ENCODE measurements at regions of chr7 and their contacts with region 1.

Region 1: DNA sequence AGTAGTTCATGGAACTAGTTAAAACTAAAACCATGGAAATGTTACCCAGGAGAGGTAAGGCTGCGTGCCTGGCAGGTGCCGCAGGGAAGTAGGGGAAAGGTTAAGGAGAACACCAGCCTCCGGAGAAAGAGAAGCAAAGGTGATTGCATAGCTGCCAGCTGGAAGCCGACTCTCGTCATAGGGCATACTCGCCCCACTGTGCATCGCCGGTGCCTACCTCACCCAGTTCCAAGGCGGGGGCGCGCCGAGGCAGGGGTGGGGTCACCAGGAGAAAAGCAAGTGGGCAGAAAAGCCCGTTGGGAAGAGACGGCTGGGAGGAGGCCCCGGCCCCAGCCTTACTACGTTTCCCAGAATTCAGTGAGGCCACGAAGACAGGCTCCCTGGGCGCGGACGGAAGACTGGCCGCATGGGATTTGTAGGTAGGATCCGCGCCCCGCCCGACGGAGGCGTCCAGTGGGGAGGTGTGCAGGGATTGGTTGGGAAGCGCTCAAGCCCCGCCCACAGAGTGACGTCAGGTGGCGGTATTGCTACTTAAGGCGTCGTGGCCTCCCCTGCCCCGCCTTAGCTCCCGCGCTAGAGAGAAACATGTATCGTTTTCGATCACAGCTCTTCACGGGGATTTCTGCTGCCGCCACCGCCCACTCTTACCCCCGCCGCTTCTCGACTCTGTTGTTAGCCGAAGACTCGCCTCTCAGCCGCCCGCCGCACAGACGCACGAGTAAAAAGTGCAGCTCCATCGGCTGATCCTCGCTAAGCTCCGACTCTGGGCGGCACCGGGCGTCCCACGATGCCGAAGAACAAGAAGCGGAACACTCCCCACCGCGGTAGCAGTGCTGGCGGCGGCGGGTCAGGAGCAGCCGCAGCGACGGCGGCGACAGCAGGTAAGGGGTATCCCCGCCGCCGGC is at the start of gene IFRD1:
- DNase-seq: peak; percentile 97 to 98 (median 97)
- H3K4me3 ChIP-seq: peak within 1 kb of the TSS; percentile 94 to 100
- H3K4me3 Mint-ChIP-seq: peak within 1 kb of the TSS; percentile 97 to 100 (median 99)
- H3K27ac ChIP-seq: peak within 1 kb of the TSS; percentile 100
- H3K27ac Mint-ChIP-seq: peak within 1 kb of the TSS; percentile 98 to 100 (median 99)
- H3K4me1 ChIP-seq: peaks cover 36% of the 10 kb centered on the region
- H3K4me1 Mint-ChIP-seq: peaks cover 25 to 48% (median 38%) of the 10 kb centered on the region in 4 donors
- H3K27me3 ChIP-seq: no peaks in the 10 kb centered on the region
- H3K27me3 Mint-ChIP-seq: no peaks in the 10 kb centered on the region
- total RNA-seq, gene IFRD1: 54.2 to 57.0 TPM

Region 2: DNA sequence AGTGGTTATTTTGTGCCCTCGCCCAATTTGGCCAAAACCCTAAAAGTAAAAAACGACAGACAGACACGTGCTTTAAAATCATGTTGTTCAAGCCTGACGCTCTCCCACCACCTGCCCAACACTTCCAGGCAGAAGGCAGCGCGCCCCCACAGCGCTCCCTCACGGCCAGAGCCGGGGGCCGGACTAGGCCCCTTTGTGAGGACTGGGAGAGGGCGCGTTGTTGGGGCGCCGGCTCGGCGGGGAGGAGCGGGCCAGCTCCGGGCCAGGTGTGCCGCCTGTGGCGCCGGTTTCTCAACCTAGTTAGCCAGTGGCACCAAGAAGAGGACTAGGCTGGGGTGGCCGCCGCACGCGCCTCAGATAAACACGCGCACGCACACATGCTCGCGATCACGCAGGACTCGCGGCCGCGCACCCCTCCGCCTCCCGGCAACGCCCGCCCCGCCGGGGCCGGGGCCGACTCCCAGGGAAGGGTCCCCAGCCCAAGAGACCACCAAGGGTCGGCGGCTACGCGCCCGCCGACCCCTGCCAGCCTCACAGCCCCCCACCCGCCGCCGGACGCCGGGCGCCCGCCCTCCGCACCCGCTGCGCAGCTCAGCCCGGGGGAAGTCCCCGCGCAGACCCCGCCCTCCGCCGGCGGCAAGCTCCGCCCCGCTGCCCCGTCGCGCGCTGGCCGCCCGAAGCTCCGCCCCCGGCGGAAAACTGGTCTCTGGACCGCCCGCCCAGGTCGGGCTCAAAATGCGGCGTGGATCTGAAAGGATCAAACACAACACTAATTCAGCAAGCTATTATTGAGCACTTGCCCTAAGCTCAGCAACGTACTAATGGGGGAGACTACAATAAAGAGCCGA is 888.0 kb before region 1 on chr7 and contains the start of gene IMMP2L:
- CTCF ChIA-PET with region 1: no interaction called
- POLR2A ChIA-PET with region 1: interaction called, 6 read pairs
- intact Hi-C with region 1: loop called (anchors 1 kb)
- DNase-seq: peak; percentile 82 to 95 (median 91)
- H3K4me3 ChIP-seq: peak within 1 kb of the TSS; percentile 73 to 74
- H3K4me3 Mint-ChIP-seq: peak within 1 kb of the TSS; percentile 90 to 94 (median 92)
- H3K27ac ChIP-seq: peak within 1 kb of the TSS; percentile 76
- H3K27ac Mint-ChIP-seq: peak within 1 kb of the TSS; percentile 88 to 98 (median 95)
- H3K4me1 ChIP-seq: peaks cover 32% of the 10 kb centered on the region
- H3K4me1 Mint-ChIP-seq: peaks cover 27 to 47% (median 36%) of the 10 kb centered on the region in 4 donors
- H3K27me3 ChIP-seq: no peaks in the 10 kb centered on the region
- H3K27me3 Mint-ChIP-seq: peaks cover 3 to 5% of the 10 kb centered on the region in 2 donors
- total RNA-seq, gene IMMP2L: 29.2 to 32.2 TPM

Region 3: DNA sequence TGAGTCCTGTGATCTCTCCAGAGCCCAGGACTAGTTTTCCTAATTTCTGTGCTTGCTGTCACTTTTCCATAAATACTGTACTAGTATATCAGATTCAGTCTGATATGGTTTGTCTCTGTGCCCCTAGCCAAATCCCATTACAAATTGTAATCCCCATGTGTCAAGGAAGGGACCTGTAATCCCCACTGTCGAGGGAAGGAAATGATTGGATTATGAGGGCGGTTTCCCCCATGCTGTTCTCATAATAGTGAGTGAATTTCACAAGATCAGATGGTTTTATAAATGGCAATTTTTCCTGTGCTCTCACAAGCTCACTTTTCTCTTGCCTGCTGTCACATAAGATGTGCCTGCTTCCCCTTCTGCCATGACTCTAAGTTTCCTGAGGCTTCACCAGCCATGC is 54.7 kb before region 1 on chr7:
- CTCF ChIA-PET with region 1: no interaction called
- POLR2A ChIA-PET with region 1: interaction called, 8 read pairs
- intact Hi-C with region 1: loop called (anchors 1 kb)
- DNase-seq: no peak
- H3K4me3 ChIP-seq: no peak overlapping the region
- H3K4me3 Mint-ChIP-seq: peak overlapping the region in 2 of 8 donors; percentile 4 to 6
- H3K27ac ChIP-seq: no peak overlapping the region
- H3K27ac Mint-ChIP-seq: peak overlapping the region in 1 of 7 donors; percentile 57
- H3K4me1 ChIP-seq: peaks cover 27% of the 10 kb centered on the region
- H3K4me1 Mint-ChIP-seq: peaks cover 27 to 51% (median 32%) of the 10 kb centered on the region in 4 donors
- H3K27me3 ChIP-seq: no peaks in the 10 kb centered on the region
- H3K27me3 Mint-ChIP-seq: peaks cover 7 to 9% of the 10 kb centered on the region in 2 donors

Region 4: GRCh38 chr7:112422842-112423496 is 27.2 kb before region 1 on chr7:
- CTCF ChIA-PET with region 1: no interaction called
- POLR2A ChIA-PET with region 1: interaction called, 10 read pairs
- intact Hi-C with region 1: loop called (anchors 2 kb)
- DNase-seq: peak in 1 of 5 donors; percentile 36
- H3K4me3 ChIP-seq: no peak overlapping the region
- H3K4me3 Mint-ChIP-seq: peak overlapping the region in 1 of 8 donors; percentile 4
- H3K27ac ChIP-seq: no peak overlapping the region
- H3K27ac Mint-ChIP-seq: peak overlapping the region in 2 of 7 donors; percentile 26 to 54
- H3K4me1 ChIP-seq: peaks cover 17% of the 10 kb centered on the region
- H3K4me1 Mint-ChIP-seq: peaks cover 11 to 16% (median 14%) of the 10 kb centered on the region in 4 donors
- H3K27me3 ChIP-seq: no peaks in the 10 kb centered on the region
- H3K27me3 Mint-ChIP-seq: no peaks in the 10 kb centered on the region

Region 5: GRCh38 chr7:112437043-112437442 is 13.1 kb before region 1 on chr7:
- CTCF ChIA-PET with region 1: no interaction called
- POLR2A ChIA-PET with region 1: no interaction called
- intact Hi-C with region 1: no loop called
- DNase-seq: no peak
- H3K4me3 ChIP-seq: no peak overlapping the region
- H3K4me3 Mint-ChIP-seq: no peak overlapping the region
- H3K27ac ChIP-seq: no peak overlapping the region
- H3K27ac Mint-ChIP-seq: no peak overlapping the region
- H3K4me1 ChIP-seq: no peaks in the 10 kb centered on the region
- H3K4me1 Mint-ChIP-seq: no peaks in the 10 kb centered on the region
- H3K27me3 ChIP-seq: no peaks in the 10 kb centered on the region
- H3K27me3 Mint-ChIP-seq: peaks cover 0 to 5% of the 10 kb centered on the region in 2 donors

Region 6: DNA sequence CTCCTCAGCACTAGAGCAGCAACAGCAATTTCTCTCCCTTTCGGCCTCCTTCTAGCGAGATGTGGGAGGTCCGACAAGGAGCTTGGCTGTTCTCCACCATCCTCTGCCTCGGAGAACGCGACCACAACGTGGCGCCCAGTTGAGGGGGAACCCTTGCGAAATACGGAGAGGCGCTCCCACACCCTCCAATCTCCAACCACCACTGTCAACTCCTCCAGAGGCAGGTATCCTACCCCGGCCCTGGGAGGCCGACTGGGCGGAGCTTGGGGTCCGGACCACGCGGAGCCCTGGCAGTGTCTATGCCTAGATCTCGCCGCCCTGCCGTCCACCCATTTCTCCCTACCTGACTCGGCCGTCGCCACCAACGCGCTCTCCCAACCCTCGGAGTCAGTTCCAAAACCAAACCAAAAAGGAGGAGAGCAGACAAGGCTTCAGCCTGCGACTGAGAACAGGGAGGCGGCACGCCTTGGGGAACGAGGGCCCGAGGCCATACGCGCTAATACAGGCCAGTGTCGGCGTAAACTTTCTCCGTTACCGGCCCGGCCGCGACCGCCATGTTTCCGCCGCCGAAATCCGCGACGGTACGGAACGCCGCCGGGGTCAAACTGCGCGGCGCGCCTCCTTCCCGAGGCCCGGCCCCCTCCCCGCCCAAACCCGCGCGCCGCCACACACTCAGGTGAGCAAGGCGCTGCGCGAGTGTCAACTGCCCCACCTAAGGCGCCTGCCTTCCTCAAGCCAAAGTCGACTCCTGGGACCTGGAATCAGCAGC is 339.8 kb after region 1 on chr7 and contains the start of gene TMEM168:
- CTCF ChIA-PET with region 1: no interaction called
- POLR2A ChIA-PET with region 1: no interaction called
- intact Hi-C with region 1: loop called (anchors 1 kb)
- DNase-seq: peak; percentile 83 to 90 (median 85)
- H3K4me3 ChIP-seq: peak within 1 kb of the TSS; percentile 59 to 93
- H3K4me3 Mint-ChIP-seq: peak within 1 kb of the TSS; percentile 91 to 96 (median 94)
- H3K27ac ChIP-seq: peak within 1 kb of the TSS; percentile 76
- H3K27ac Mint-ChIP-seq: peak within 1 kb of the TSS; percentile 82 to 95 (median 92)
- H3K4me1 ChIP-seq: peaks cover 16% of the 10 kb centered on the region
- H3K4me1 Mint-ChIP-seq: peaks cover 27 to 58% (median 38%) of the 10 kb centered on the region in 4 donors
- H3K27me3 ChIP-seq: no peaks in the 10 kb centered on the region
- H3K27me3 Mint-ChIP-seq: no peaks in the 10 kb centered on the region
- total RNA-seq, gene TMEM168: 25.9 to 31.9 TPM

Region 7: GRCh38 chr7:112939574-112940314 is 489.6 kb after region 1 on chr7:
- CTCF ChIA-PET with region 1: no interaction called
- POLR2A ChIA-PET with region 1: interaction called, 23 read pairs
- intact Hi-C with region 1: loop called (anchors 1 kb)
- DNase-seq: peak; percentile 99 to 100 (median 99)
- H3K4me3 ChIP-seq: peak overlapping the region; percentile 71 to 72
- H3K4me3 Mint-ChIP-seq: peak overlapping the region; percentile 92 to 99 (median 96)
- H3K27ac ChIP-seq: peak overlapping the region; percentile 71
- H3K27ac Mint-ChIP-seq: peak overlapping the region; percentile 90 to 99 (median 97)
- H3K4me1 ChIP-seq: peaks cover 40% of the 10 kb centered on the region
- H3K4me1 Mint-ChIP-seq: peaks cover 31 to 59% (median 43%) of the 10 kb centered on the region in 4 donors
- H3K27me3 ChIP-seq: no peaks in the 10 kb centered on the region
- H3K27me3 Mint-ChIP-seq: peaks cover 0 to 4% of the 10 kb centered on the region in 2 donors

Region 8: DNA sequence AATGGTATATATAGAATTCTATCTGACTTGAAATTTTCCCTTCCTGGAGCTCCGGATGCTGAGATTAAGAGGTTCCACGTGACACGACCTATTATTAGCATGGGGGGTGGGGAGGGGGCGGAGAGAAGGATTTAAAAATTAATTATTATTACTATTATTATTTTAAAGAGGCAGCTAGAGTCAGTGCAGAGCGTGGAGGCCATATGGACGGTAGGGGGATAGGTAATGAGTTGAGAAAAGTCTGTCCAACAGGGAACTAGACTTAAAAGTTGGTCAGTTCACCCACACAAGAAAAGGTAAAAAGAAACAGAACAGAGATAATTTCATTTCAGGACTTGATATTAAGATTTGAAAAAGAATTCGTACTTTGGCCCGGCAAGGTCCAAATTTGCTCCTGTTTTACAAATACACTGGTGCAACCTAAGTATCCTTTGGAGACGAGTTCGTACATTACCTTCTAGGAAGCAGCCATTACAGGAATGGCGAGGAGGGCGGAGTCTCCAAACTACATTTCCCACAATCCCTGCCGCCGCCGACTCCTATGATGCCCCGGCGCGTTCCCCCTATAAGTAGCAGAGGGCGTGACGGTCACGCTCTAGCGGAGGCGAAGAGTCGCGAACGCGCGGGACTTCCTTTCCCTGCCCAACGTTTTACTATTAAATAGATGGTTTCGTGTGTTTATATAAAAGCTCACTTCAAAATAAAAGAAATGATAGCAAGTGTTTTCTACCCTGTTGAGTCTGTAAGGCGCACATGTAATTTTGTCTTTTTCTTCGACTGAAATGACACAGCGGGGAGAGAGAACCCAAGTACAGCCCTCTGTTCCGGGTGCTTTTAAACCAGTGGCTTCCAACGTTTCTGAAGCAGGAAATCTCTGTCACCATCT is 668.2 kb after region 1 on chr7 and contains the start of gene SMIM30:
- CTCF ChIA-PET with region 1: no interaction called
- POLR2A ChIA-PET with region 1: interaction called, 5 read pairs
- intact Hi-C with region 1: loop called (anchors 1 kb)
- DNase-seq: peak; percentile 85 to 89 (median 87)
- H3K4me3 ChIP-seq: peak within 1 kb of the TSS; percentile 65 to 70
- H3K4me3 Mint-ChIP-seq: peak within 1 kb of the TSS; percentile 94 to 99 (median 96)
- H3K27ac ChIP-seq: peak within 1 kb of the TSS; percentile 70
- H3K27ac Mint-ChIP-seq: peak within 1 kb of the TSS; percentile 84 to 99 (median 98)
- H3K4me1 ChIP-seq: peaks cover 13% of the 10 kb centered on the region
- H3K4me1 Mint-ChIP-seq: peaks cover 11 to 24% (median 14%) of the 10 kb centered on the region in 4 donors
- H3K27me3 ChIP-seq: no peaks in the 10 kb centered on the region
- H3K27me3 Mint-ChIP-seq: no peaks in the 10 kb centered on the region
- total RNA-seq, gene SMIM30: 21.6 to 21.8 TPM